ENCODE measurements at regions of chr22 and their contacts with region 1.

Region 1: DNA sequence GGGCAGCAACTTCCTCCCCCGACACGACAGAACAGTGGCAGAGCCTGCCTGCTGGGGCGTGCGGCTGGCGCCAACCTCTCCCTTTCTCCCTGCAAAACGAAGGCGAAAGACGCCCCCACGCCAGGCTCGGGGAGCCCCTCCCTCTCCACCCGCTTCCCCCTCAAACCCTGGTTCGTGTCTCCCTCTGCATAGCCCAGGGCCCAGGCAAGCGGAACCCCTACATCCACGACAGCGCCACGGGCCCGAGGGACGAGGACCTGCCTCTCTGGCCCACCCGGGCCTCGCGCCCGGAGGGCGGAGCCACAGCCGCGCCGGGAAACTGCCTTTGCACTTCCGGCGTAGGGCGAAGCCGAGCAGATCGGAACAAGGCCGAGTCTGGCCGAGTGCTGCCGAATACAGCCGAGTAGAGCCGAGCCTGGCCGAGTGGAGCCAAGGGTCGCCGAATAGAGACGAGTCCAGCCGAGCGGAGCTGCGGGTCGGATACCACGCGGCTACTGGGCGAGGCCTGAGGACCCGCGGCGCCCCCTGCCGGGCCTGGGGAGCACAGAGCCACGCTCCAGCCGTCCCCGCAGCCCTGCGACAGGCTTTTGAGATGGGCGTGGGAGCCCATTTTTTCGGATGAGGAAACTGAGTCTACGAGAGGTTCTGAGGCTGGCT is 11.2 kb upstream of the C1QTNF6 start:
- DNase-seq: peak; percentile 97 to 100 (median 99)
- ATAC-seq: peak; percentile 95
- H3K4me3 ChIP-seq: peak overlapping the region; percentile 87
- H3K4me3 Mint-ChIP-seq: peak overlapping the region; percentile 93
- H3K27ac ChIP-seq: peak overlapping the region; percentile 90 to 94
- H3K27ac Mint-ChIP-seq: peak overlapping the region; percentile 100
- H3K4me1 ChIP-seq: peaks cover 57% of the 10 kb centered on the region
- H3K4me1 Mint-ChIP-seq: peaks cover 48% of the 10 kb centered on the region
- H3K27me3 ChIP-seq: no peaks in the 10 kb centered on the region
- H3K27me3 Mint-ChIP-seq: no peaks in the 10 kb centered on the region
- CTCF ChIP-seq: peak; percentile 90

Region 2: GRCh38 chr22:36856121-36856791 is 343.0 kb before region 1 on chr22:
- CTCF ChIA-PET with region 1: interaction called, 3 read pairs
- POLR2A ChIA-PET with region 1: no interaction called
- intact Hi-C with region 1: loop called in 1 of 2 experiments (anchors 10 kb)
- DNase-seq: peak; percentile 84 to 99 (median 94)
- ATAC-seq: peak; percentile 71
- H3K4me3 ChIP-seq: no peak overlapping the region
- H3K4me3 Mint-ChIP-seq: peak overlapping the region; percentile 65
- H3K27ac ChIP-seq: no peak overlapping the region
- H3K27ac Mint-ChIP-seq: no peak overlapping the region
- H3K4me1 ChIP-seq: peaks cover 32% of the 10 kb centered on the region
- H3K4me1 Mint-ChIP-seq: peaks cover 17% of the 10 kb centered on the region
- H3K27me3 ChIP-seq: no peaks in the 10 kb centered on the region
- H3K27me3 Mint-ChIP-seq: peaks cover 5% of the 10 kb centered on the region
- CTCF ChIP-seq: peak; percentile 100

Region 3: GRCh38 chr22:37121887-37122591 is 77.2 kb before region 1 on chr22:
- CTCF ChIA-PET with region 1: interaction called, 19 read pairs
- POLR2A ChIA-PET with region 1: interaction called, 19 read pairs
- intact Hi-C with region 1: loop called in 1 of 2 experiments (anchors 1 kb)
- DNase-seq: peak; percentile 78 to 99 (median 88)
- ATAC-seq: peak; percentile 95
- H3K4me3 ChIP-seq: peak overlapping the region; percentile 30
- H3K4me3 Mint-ChIP-seq: peak overlapping the region; percentile 84
- H3K27ac ChIP-seq: peak overlapping the region; percentile 96
- H3K27ac Mint-ChIP-seq: peak overlapping the region; percentile 95
- H3K4me1 ChIP-seq: peaks cover 61% of the 10 kb centered on the region
- H3K4me1 Mint-ChIP-seq: peaks cover 52% of the 10 kb centered on the region
- H3K27me3 ChIP-seq: no peaks in the 10 kb centered on the region
- H3K27me3 Mint-ChIP-seq: no peaks in the 10 kb centered on the region
- CTCF ChIP-seq: peak; percentile 35

Region 4: GRCh38 chr22:37210041-37210803 is 11.0 kb after region 1 on chr22:
- CTCF ChIA-PET with region 1: interaction called, 42 read pairs
- POLR2A ChIA-PET with region 1: interaction called, 14 read pairs
- intact Hi-C with region 1: no loop called
- DNase-seq: peak in 3 of 14 experiments; percentile 2 to 33 (median 16)
- ATAC-seq: no peak
- H3K4me3 ChIP-seq: no peak overlapping the region
- H3K4me3 Mint-ChIP-seq: peak overlapping the region; percentile 4
- H3K27ac ChIP-seq: no peak overlapping the region
- H3K27ac Mint-ChIP-seq: peak overlapping the region; percentile 33
- H3K4me1 ChIP-seq: peaks cover 51% of the 10 kb centered on the region
- H3K4me1 Mint-ChIP-seq: peaks cover 58% of the 10 kb centered on the region
- H3K27me3 ChIP-seq: no peaks in the 10 kb centered on the region
- H3K27me3 Mint-ChIP-seq: no peaks in the 10 kb centered on the region
- CTCF ChIP-seq: no peak

Region 5: GRCh38 chr22:37237371-37238268 is 38.4 kb after region 1 on chr22:
- CTCF ChIA-PET with region 1: interaction called, 89 read pairs
- POLR2A ChIA-PET with region 1: interaction called, 64 read pairs
- intact Hi-C with region 1: loop called (anchors 2 kb)
- DNase-seq: peak in 5 of 14 experiments; percentile 18 to 46 (median 38)
- ATAC-seq: peak; percentile 13
- H3K4me3 ChIP-seq: peak overlapping the region; percentile 34
- H3K4me3 Mint-ChIP-seq: peak overlapping the region; percentile 95
- H3K27ac ChIP-seq: peak overlapping the region; percentile 73 to 96
- H3K27ac Mint-ChIP-seq: peak overlapping the region; percentile 97
- H3K4me1 ChIP-seq: peaks cover 100% of the 10 kb centered on the region
- H3K4me1 Mint-ChIP-seq: peaks cover 98% of the 10 kb centered on the region
- H3K27me3 ChIP-seq: no peaks in the 10 kb centered on the region
- H3K27me3 Mint-ChIP-seq: no peaks in the 10 kb centered on the region
- CTCF ChIP-seq: no peak